ENCODE measurements at regions of chr11 and their contacts with region 1.

Region 1: GRCh38 chr11:68121067-68121899 is at the start of gene CHKA:
- DNase-seq: peak; percentile 47
- ATAC-seq: peak; percentile 89
- H3K4me3 ChIP-seq: peak within 1 kb of the TSS; percentile 92
- H3K27ac ChIP-seq: peak within 1 kb of the TSS; percentile 89
- H3K4me1 ChIP-seq: peaks cover 12% of the 10 kb centered on the region
- H3K27me3 ChIP-seq: no peaks in the 10 kb centered on the region
- CTCF ChIP-seq: no peak
- EP300 ChIP-seq: no peak
- POLR2A ChIP-seq: peak; percentile 76
- RAD21 ChIP-seq: no peak
- polyA plus RNA-seq, gene CHKA: 5.2 to 5.3 TPM

Region 2: GRCh38 chr11:68003846-68004550 is 117.3 kb before region 1 on chr11 and contains the start of gene UNC93B1:
- CTCF ChIA-PET with region 1: interaction called, 4 read pairs
- POLR2A ChIA-PET with region 1: interaction called, 3 read pairs
- RAD21 ChIA-PET with region 1: no interaction called
- SMC1A ChIA-PET with region 1: no interaction called
- in situ Hi-C with region 1: no loop called
- intact Hi-C with region 1: loop called (anchors 10 kb)
- DNase-seq: peak; percentile 57
- ATAC-seq: peak; percentile 88
- H3K4me3 ChIP-seq: peak within 1 kb of the TSS; percentile 92
- H3K27ac ChIP-seq: peak within 1 kb of the TSS; percentile 78
- H3K4me1 ChIP-seq: peaks cover 36% of the 10 kb centered on the region
- H3K27me3 ChIP-seq: no peaks in the 10 kb centered on the region
- CTCF ChIP-seq: no peak
- EP300 ChIP-seq: no peak
- POLR2A ChIP-seq: peak; percentile 87
- RAD21 ChIP-seq: no peak
- polyA plus RNA-seq, gene UNC93B1: 1.3 to 3.4 TPM

Region 3: GRCh38 chr11:68038718-68039525 is 82.4 kb before region 1 on chr11 and contains the start of gene TCIRG1:
- CTCF ChIA-PET with region 1: interaction called, 3 read pairs
- POLR2A ChIA-PET with region 1: interaction called, 21 read pairs
- RAD21 ChIA-PET with region 1: interaction called, 23 read pairs
- SMC1A ChIA-PET with region 1: interaction called, 19 read pairs
- in situ Hi-C with region 1: no loop called
- intact Hi-C with region 1: loop called (anchors 5 kb)
- DNase-seq: peak; percentile 15
- ATAC-seq: peak; percentile 78
- H3K4me3 ChIP-seq: peak within 1 kb of the TSS; percentile 99
- H3K27ac ChIP-seq: peak within 1 kb of the TSS; percentile 91
- H3K4me1 ChIP-seq: peaks cover 13% of the 10 kb centered on the region
- H3K27me3 ChIP-seq: no peaks in the 10 kb centered on the region
- CTCF ChIP-seq: no peak
- EP300 ChIP-seq: no peak
- POLR2A ChIP-seq: peak; percentile 91
- RAD21 ChIP-seq: no peak
- polyA plus RNA-seq, gene TCIRG1: 0.76 to 7.5 TPM

Region 4: DNA sequence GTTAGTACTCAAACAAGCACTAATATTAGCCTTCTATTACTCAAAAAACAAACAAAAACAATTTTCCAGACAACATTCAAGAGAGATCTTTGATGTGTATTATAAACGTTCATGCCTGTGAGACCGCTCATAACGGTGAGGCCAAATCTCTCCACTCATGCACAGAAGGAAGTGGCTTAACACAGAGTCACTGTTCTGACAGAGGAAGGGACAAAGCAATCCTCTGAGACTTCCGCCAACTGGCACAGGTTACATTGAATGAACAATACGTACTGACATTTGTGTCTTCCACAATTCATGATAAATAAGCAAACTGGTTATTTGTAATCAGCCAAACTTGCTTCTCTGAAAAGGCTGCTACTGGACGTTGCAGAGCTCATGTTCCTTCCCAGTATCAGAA is 30.6 kb before region 1 on chr11:
- CTCF ChIA-PET with region 1: interaction called, 4 read pairs
- POLR2A ChIA-PET with region 1: interaction called, 4 read pairs
- RAD21 ChIA-PET with region 1: interaction called, 4 read pairs
- SMC1A ChIA-PET with region 1: interaction called, 15 read pairs
- in situ Hi-C with region 1: no loop called
- intact Hi-C with region 1: no loop called
- DNase-seq: no peak
- ATAC-seq: peak; percentile 74
- H3K4me3 ChIP-seq: no peak overlapping the region; the same call in 1 of the 2 replicates
- H3K27ac ChIP-seq: peak overlapping the region; percentile 20
- H3K4me1 ChIP-seq: no peaks in the 10 kb centered on the region; the same call in 1 of the 2 replicates
- H3K27me3 ChIP-seq: no peaks in the 10 kb centered on the region
- CTCF ChIP-seq: no peak
- EP300 ChIP-seq: no peak
- POLR2A ChIP-seq: no peak
- RAD21 ChIP-seq: no peak

Region 5: DNA sequence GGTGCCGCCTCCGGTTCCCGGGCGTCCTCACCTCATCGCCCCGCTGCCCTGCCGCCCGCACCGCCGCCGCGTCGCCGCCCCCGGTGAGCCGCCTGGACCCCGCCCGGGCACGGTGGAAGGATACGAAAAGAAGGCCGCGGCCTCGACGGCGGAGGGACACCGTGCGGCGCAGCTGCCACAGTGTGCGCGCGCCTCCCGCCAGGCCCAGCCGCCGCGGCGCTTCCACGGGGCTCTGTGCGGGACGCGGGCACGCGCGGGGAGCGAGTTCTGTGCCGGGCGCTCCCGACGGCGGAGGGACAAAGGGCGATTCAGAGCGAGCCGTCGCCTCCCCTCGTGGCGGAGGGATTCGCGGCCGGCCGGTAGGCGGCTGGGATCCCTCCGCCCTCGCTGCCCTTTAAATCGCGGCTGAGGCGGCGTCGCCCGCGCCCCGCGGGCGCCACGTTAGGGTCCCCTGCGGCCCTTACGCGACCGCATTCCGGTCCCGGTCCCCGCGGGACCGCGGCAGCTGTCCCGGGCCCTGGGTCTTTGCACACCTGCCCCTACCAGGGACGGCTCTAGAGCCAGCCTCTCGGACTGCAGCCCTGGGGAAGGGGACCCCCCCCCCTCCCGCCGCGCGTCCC is 92.4 kb after region 1 on chr11:
- CTCF ChIA-PET with region 1: interaction called, 10 read pairs
- POLR2A ChIA-PET with region 1: interaction called, 6 read pairs
- RAD21 ChIA-PET with region 1: interaction called, 3 read pairs
- SMC1A ChIA-PET with region 1: interaction called, 6 read pairs
- in situ Hi-C with region 1: no loop called
- intact Hi-C with region 1: no loop called
- DNase-seq: no peak
- ATAC-seq: peak; percentile 60
- H3K4me3 ChIP-seq: peak overlapping the region; percentile 93
- H3K27ac ChIP-seq: peak overlapping the region; percentile 91
- H3K4me1 ChIP-seq: peaks cover 11% of the 10 kb centered on the region
- H3K27me3 ChIP-seq: no peaks in the 10 kb centered on the region
- CTCF ChIP-seq: no peak
- EP300 ChIP-seq: no peak
- POLR2A ChIP-seq: peak; percentile 99
- RAD21 ChIP-seq: no peak

Measured in GM12878 (cell line).